Common myeloid progenitor, CD34-positive (primary cell): ENCODE measurements at regions of chr1 and their contacts with region 1.

Region 1: GRCh38 chr1:204190212-204191211 is 5.8 kb downstream of the KISS1 start:
- DNase-seq: peak; percentile 89 to 96 (median 92)
- H3K4me3 ChIP-seq: peak overlapping the region in 6 of 7 experiments; percentile 4 to 68 (median 32)
- H3K27ac ChIP-seq: no peak overlapping the region
- H3K4me1 ChIP-seq: peaks cover 6 to 50% (median 32%) of the 10 kb centered on the region in 4 experiments
- H3K27me3 ChIP-seq: no peaks in the 10 kb centered on the region

Region 2: GRCh38 chr1:204177133-204177532 is 13.4 kb before region 1 on chr1:
- CTCF ChIA-PET with region 1: interaction called, 180 read pairs
- POLR2A ChIA-PET with region 1: no interaction called
- DNase-seq: peak; percentile 49 to 68 (median 56)
- H3K4me3 ChIP-seq: no peak overlapping the region
- H3K27ac ChIP-seq: no peak overlapping the region
- H3K4me1 ChIP-seq: peaks cover 0 to 32% (median 26%) of the 10 kb centered on the region in 4 experiments
- H3K27me3 ChIP-seq: no peaks in the 10 kb centered on the region

Region 3: DNA sequence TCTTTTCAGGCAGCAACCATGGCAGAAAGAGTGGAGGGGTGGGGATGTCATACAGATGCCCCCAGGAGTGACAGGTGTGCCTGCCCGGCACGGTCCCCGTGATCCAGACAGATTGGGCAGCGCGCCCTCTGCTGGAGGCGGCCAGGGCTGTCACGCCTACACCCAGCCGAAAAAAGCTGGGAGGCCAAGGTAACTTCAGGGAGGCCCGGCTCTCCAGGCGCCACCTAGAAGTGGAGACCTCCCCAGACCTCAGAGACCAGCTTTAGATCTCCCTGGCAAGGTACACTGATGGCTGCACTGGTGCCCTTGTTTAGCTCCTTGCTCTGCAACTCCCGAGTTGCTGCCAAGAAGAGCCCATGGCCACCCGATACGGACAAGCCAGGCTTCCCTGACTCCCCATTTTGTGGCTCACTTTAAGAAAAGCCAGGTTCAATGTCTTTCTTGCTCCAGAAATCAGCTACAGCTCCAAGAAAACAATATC is 16.7 kb after region 1 on chr1:
- CTCF ChIA-PET with region 1: interaction called, 45 read pairs
- POLR2A ChIA-PET with region 1: no interaction called
- DNase-seq: peak; percentile 50 to 63 (median 58)
- H3K4me3 ChIP-seq: no peak overlapping the region
- H3K27ac ChIP-seq: no peak overlapping the region
- H3K4me1 ChIP-seq: peaks cover 0 to 6% (median 0%) of the 10 kb centered on the region in 4 experiments
- H3K27me3 ChIP-seq: no peaks in the 10 kb centered on the region

Region 4: DNA sequence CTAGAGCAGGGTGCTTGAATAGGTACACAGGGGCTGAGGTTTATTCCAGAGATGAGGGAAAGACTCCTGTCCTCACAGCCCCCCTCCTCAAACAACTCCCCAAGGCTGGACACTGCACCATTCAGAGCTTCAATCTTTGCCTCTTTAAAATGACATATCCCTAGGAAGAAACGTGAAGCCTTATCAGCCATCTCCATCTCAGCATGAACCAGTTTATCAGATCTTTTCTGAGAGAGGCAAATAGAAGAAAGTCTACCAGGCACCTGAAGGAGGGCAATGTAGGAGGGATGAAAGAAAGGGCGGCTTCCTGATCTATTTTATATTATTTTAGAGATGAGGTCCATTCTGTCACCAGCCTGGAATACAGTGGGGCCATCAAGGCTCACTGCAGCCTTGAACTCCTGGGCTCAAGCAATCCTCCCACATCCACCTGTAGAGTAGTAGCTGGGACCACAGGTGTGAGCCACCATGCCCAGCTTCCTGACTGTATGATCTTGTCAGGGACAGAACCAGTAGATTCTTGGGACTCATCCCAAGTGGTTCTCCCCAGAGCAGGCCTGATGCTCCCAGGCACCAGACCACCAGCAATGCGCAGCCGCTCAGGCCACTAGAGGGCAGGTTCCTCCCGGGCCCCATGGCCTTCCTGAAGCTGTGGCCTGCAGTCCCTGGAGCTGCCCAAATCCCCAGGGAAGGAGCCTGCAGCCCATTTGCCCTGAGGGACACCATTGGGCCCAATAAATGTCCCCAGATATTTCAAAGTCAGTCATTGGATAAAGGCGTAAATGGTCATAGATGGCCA is 67.6 kb after region 1 on chr1:
- CTCF ChIA-PET with region 1: no interaction called
- POLR2A ChIA-PET with region 1: no interaction called
- DNase-seq: peak; percentile 43 to 51 (median 46)
- H3K4me3 ChIP-seq: no peak overlapping the region
- H3K27ac ChIP-seq: no peak overlapping the region
- H3K4me1 ChIP-seq: peaks cover 0 to 14% (median 3%) of the 10 kb centered on the region in 4 experiments
- H3K27me3 ChIP-seq: no peaks in the 10 kb centered on the region